Thyroid gland (tissue), 4 donors: ENCODE measurements at regions of chr5 and their contacts with region 1.

Region 1: DNA sequence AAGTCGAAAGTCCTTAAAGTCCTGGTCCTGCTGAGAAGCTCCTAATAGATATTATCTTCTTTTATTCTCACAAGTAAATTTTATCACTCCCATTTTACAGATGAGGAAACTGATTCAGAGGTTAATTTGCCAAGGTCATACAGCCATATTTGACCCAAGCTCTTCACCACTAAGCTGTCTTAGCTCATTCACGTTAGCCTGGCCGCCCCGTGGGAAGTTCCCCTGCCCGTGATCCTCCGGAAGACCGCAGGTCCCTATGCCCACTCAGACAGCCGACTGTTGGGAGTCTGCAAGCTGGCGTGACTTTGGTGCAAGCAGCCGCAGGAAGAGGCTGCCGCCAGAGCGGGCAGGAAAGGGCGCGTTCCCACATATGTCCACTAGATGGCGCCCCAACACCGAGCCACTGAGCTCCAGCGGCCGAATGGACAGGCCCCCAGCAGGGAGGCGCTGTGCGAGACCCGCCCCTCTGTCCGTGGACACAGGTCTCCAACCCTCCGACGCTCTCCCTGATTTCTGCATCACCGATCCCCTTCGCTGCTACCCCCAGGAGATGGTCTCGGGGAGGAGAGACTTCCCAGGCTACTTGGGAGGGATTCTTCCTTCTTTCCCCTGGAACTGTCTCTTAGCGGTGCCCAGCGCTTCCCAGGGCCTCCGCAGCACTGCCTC is 10.0 kb upstream of the ARAP3 start:
- DNase-seq: peak; percentile 81 to 83
- H3K4me3 ChIP-seq: no peak overlapping the region
- H3K27ac ChIP-seq: no peak overlapping the region
- H3K4me1 ChIP-seq: peaks cover 0 to 4% of the 10 kb centered on the region in 2 donors
- H3K27me3 ChIP-seq: no peaks in the 10 kb centered on the region
- CTCF ChIP-seq: peak; percentile 96 to 99 (median 98)
- POLR2A ChIP-seq: no peak

Region 2: GRCh38 chr5:141547488-141547887 is 144.5 kb before region 1 on chr5:
- intact Hi-C with region 1: no loop called
- DNase-seq: no peak
- H3K4me3 ChIP-seq: no peak overlapping the region
- H3K27ac ChIP-seq: no peak overlapping the region
- H3K4me1 ChIP-seq: no peaks in the 10 kb centered on the region
- H3K27me3 ChIP-seq: no peaks in the 10 kb centered on the region
- CTCF ChIP-seq: no peak
- POLR2A ChIP-seq: no peak

Region 3: DNA sequence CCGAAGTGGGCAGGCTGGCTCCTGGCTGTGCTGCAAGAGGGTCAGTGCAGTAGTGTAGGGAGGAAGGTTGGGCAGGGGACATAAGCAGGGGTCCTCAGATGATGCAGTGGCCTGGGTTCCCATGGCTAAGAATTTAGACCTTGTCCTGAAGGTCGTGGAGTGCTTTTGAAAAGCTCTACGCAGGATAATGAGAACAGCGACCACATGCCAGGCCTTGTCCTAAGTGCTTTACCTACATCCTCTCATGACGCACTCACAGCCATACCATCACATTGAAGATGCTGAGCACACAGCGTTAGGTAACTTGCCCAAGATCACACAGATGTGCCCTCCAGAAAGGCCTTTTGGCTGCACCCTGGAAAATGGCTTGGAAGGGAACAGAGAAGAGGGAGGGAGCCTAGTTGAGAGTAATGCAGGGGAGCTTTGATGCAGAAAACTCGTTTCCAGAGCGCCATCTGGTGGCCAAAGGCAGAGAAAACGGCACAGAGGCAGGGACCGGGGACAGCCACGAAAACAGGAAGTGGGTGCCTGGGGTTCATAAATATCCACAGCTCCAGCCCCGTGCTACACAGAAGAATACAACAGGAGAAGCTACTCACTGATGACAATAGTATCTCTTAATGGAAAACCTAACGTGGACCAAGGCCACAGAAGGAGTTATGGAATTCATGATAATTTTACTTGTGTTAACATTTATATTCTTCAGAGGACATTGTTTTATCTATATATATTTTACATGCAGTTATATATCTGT is 268.6 kb after region 1 on chr5:
- intact Hi-C with region 1: loop called (anchors 2 kb)
- DNase-seq: peak; percentile 82 to 90
- H3K4me3 ChIP-seq: no peak overlapping the region
- H3K27ac ChIP-seq: peak overlapping the region in 1 of 3 donors; percentile 11
- H3K4me1 ChIP-seq: no peaks in the 10 kb centered on the region
- H3K27me3 ChIP-seq: no peaks in the 10 kb centered on the region
- CTCF ChIP-seq: peak; percentile 69 to 84 (median 75)
- POLR2A ChIP-seq: no peak